HepG2 (cell line): ENCODE measurements at regions of chr15 and their contacts with region 1.

Region 1: DNA sequence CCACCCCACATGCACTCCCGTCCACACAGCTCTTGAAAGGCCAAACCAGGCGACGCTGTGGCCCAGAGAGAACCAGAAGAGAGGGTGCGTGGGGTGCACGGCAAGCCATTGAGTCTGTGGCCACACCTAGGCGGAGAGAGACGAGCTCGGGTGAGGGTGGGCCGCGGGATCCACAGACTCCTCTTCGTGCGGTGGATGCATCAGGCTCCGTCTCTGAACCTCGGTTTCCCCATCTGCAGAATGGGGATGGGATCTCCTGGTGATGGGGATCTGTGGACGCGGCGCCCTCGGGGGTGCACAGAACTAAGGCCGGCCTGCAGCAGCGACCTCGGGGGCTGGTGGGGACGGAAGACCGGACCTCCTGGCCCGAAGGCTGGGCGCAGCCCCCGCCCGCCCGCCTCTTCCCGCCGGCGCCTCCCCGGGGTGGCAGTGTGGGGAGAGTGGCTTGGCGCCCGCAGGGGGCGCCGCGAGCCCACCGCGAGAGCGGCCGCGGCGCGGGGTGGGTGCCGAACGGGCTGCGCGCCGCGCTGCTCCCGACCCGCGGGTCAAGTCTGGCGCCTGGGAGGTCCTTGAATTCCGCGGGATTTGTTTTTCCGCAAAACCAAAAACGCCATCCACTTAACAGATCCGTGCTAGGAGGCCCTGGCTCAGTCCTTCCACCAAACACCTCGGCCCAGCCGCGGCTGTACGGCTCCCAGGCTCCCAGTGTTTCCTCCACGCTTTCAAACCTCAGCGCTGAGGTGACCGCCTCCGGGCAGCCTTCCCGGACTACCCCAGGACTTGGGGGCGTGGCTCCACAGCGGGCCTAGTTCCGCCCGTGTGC is 13.2 kb upstream of the ADPGK start:
- DNase-seq: no peak
- ATAC-seq: peak; percentile 96
- H3K4me3 ChIP-seq: peak overlapping the region; percentile 56 to 81 (median 65)
- H3K27ac ChIP-seq: no peak overlapping the region
- H3K4me1 ChIP-seq: peaks cover 10% of the 10 kb centered on the region; the same call in 1 of the 2 replicates
- H3K27me3 ChIP-seq: peaks cover 1 to 14% of the 10 kb centered on the region in 2 experiments; a peak in 4 of 5 replicates
- CTCF ChIP-seq: peak; percentile 54; the same call in 1 of the 2 replicates
- EP300 ChIP-seq: no peak
- POLR2A ChIP-seq: no peak
- RAD21 ChIP-seq: peak; percentile 82

Region 2: DNA sequence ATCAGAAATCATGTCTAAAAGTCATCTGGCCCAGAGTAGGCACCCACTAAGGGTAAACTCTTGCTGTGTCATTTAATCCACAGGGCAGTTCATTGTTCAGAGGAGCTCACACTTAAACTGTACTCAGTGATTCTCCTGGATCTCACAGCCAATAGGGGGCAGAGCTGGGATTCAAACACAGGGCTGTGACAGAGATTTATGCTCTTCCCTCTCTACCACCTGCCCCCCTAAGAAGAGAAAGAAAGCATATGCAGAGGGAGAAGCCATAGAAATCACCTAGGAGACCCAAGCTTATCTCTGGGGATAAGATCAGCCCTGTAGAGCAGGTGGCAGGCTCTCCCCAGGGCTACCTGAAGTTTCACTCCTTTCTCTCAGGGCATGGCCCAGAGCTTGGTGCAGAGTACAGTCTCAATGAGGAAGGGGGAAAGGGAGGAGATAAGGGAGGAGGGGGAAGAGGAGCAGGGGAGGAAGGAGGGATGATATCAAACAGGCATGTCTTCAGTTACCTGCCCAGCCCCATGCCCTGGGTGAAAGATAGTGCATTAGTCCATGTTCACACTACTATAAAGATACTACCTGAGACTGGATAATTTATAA is 38.7 kb after region 1 on chr15:
- CTCF ChIA-PET with region 1: no interaction called
- POLR2A ChIA-PET with region 1: no interaction called
- in situ Hi-C with region 1: no loop called
- intact Hi-C with region 1: no loop called
- DNase-seq: peak; percentile 4
- ATAC-seq: peak; percentile 44; the same call in 1 of the 3 replicates
- H3K4me3 ChIP-seq: no peak overlapping the region
- H3K27ac ChIP-seq: no peak overlapping the region
- H3K4me1 ChIP-seq: no peaks in the 10 kb centered on the region
- H3K27me3 ChIP-seq: no peaks in the 10 kb centered on the region; a peak in 1 of 5 replicates
- CTCF ChIP-seq: 0 out of 2 replicates have a peak, but pooled peaks have one; percentile 16
- EP300 ChIP-seq: no peak
- POLR2A ChIP-seq: no peak
- RAD21 ChIP-seq: no peak

Region 3: DNA sequence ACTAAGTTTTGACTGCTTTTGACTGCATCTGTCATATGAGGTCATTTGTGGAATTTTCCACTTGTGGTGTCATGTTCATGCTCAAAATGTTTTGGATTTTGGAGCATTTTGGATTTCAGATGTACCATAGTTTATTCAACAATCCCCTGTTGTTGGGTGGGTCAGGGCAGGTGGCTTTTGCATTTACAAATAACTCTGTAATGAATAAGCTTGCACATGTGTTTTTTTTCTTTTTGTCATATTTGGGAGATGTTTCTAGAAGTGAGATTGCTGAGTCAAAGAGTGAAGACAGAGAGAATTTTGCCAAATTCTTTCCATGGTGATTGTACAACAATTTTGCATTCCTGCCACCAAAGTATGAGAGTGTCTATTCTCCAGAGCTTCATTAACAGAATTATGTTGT is 49.3 kb after region 1 on chr15:
- CTCF ChIA-PET with region 1: no interaction called
- POLR2A ChIA-PET with region 1: no interaction called
- in situ Hi-C with region 1: loop called (anchors 5 kb)
- intact Hi-C with region 1: no loop called
- DNase-seq: no peak
- ATAC-seq: no peak
- H3K4me3 ChIP-seq: no peak overlapping the region
- H3K27ac ChIP-seq: no peak overlapping the region
- H3K4me1 ChIP-seq: no peaks in the 10 kb centered on the region
- H3K27me3 ChIP-seq: peaks cover 0 to 18% of the 10 kb centered on the region in 2 experiments; a peak in 3 of 5 replicates
- CTCF ChIP-seq: no peak
- EP300 ChIP-seq: no peak
- POLR2A ChIP-seq: no peak
- RAD21 ChIP-seq: no peak

Region 4: GRCh38 chr15:72873379-72874233 is 76.9 kb after region 1 on chr15:
- CTCF ChIA-PET with region 1: no interaction called
- POLR2A ChIA-PET with region 1: no interaction called
- in situ Hi-C with region 1: no loop called
- intact Hi-C with region 1: no loop called
- DNase-seq: no peak
- ATAC-seq: no peak
- H3K4me3 ChIP-seq: no peak overlapping the region
- H3K27ac ChIP-seq: no peak overlapping the region
- H3K4me1 ChIP-seq: no peaks in the 10 kb centered on the region
- H3K27me3 ChIP-seq: peaks cover 1 to 8% of the 10 kb centered on the region in 2 experiments; a peak in 4 of 5 replicates
- CTCF ChIP-seq: no peak
- EP300 ChIP-seq: no peak
- POLR2A ChIP-seq: no peak
- RAD21 ChIP-seq: no peak

Region 5: DNA sequence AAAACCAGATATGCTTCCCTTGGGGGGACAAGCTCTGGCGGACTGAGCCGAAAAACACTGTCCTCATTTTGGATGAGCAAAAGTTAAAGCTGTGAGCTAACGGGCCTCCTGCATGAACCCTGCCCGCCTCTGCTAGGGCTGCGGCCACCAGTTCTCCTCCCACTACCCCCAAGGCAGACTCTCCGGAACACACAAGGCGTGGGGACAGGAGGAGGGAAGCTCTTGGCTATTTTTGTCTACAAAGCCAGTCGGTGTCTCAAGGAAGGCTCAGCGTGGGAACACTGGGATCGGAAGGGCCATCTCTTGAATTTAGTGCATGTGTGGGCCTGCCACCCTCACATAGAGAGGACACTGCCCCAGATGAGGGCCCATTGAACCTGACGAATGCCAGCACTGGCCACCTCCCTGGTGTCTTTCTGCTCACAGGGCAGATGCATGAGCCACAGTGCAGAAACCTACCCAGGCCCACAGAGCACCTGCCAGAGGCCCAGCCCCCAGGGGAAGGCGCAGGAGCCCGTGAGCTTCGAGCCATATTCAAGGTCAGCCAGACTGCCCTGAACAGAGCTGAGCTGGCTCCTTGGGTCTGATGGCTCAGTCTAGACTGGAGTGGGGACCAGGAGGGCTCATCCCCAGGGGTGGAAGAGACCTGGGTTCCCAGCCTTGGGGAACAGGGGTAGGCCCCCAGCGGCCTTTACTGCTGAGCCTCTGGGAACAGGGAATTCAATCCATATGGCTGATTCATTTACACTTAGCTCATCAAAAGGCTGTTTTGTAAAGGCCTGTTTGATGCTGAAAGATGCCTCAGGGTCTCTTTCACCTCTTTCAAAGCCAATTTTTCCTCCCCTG is 533.7 kb after region 1 on chr15:
- CTCF ChIA-PET with region 1: no interaction called
- POLR2A ChIA-PET with region 1: no interaction called
- in situ Hi-C with region 1: no loop called
- intact Hi-C with region 1: no loop called
- DNase-seq: no peak
- ATAC-seq: peak; percentile 30
- H3K4me3 ChIP-seq: no peak overlapping the region
- H3K27ac ChIP-seq: no peak overlapping the region
- H3K4me1 ChIP-seq: no peaks in the 10 kb centered on the region
- H3K27me3 ChIP-seq: peaks cover 3 to 22% of the 10 kb centered on the region in 2 experiments; a peak in 4 of 5 replicates
- CTCF ChIP-seq: no peak
- EP300 ChIP-seq: no peak
- POLR2A ChIP-seq: no peak
- RAD21 ChIP-seq: no peak